HEK293 (cell line): ENCODE measurements at regions of chr18 and their contacts with region 1.

Region 1: GRCh38 chr18:12376718-12377555 is at the start of gene AFG3L2:
- H3K4me3 ChIP-seq: peak within 1 kb of the TSS; percentile 68
- H3K27ac ChIP-seq: peak within 1 kb of the TSS; percentile 99
- H3K4me1 ChIP-seq: peaks cover 16% of the 10 kb centered on the region
- CTCF ChIP-seq: no peak

Region 2: DNA sequence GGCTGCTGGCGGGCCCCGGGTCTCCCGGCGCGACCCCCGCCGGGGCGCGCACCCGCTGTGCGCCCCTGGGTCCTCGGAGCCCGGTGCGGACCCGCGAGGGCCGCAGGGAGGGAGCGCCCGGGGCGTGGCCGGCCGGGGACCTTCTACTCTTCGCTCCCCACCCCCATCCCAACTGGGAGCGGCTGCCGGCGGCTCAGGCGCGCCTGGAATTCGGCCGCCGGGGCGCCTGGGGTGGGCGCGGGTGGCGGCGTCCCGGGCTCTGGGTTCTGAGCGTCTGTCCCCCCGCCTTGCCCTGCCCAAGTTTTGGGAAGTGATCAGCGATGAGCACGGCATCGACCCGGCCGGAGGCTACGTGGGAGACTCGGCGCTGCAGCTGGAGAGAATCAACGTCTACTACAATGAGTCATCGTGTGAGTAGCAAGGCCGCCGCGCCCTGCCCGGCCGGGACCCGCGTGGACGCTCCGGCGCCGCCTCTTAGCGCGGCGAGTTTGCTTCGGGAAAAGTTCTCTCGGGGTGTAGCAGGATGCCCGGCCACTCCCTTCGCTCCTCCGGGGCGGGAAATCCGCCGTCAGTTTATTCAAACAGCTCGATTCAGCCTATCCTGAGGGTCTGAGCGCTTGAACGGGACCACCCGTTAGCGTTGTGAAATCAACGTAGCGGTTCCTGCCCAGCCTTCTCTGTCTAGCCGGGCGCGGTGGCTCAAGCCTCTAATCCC is 68.4 kb before region 1 on chr18:
- CTCF ChIA-PET with region 1: no interaction called
- POLR2A ChIA-PET with region 1: interaction called, 17 read pairs
- H3K4me3 ChIP-seq: peak overlapping the region; percentile 70
- H3K27ac ChIP-seq: peak overlapping the region; percentile 80; the same call in 1 of the 2 replicates
- H3K4me1 ChIP-seq: no peaks in the 10 kb centered on the region
- CTCF ChIP-seq: no peak

Region 3: GRCh38 chr18:12408247-12408869 is 31.4 kb after region 1 on chr18:
- CTCF ChIA-PET with region 1: interaction called, 6 read pairs
- POLR2A ChIA-PET with region 1: interaction called, 35 read pairs
- H3K4me3 ChIP-seq: peak overlapping the region; percentile 52
- H3K27ac ChIP-seq: peak overlapping the region; percentile 94
- H3K4me1 ChIP-seq: peaks cover 14% of the 10 kb centered on the region
- CTCF ChIP-seq: no peak

Region 4: DNA sequence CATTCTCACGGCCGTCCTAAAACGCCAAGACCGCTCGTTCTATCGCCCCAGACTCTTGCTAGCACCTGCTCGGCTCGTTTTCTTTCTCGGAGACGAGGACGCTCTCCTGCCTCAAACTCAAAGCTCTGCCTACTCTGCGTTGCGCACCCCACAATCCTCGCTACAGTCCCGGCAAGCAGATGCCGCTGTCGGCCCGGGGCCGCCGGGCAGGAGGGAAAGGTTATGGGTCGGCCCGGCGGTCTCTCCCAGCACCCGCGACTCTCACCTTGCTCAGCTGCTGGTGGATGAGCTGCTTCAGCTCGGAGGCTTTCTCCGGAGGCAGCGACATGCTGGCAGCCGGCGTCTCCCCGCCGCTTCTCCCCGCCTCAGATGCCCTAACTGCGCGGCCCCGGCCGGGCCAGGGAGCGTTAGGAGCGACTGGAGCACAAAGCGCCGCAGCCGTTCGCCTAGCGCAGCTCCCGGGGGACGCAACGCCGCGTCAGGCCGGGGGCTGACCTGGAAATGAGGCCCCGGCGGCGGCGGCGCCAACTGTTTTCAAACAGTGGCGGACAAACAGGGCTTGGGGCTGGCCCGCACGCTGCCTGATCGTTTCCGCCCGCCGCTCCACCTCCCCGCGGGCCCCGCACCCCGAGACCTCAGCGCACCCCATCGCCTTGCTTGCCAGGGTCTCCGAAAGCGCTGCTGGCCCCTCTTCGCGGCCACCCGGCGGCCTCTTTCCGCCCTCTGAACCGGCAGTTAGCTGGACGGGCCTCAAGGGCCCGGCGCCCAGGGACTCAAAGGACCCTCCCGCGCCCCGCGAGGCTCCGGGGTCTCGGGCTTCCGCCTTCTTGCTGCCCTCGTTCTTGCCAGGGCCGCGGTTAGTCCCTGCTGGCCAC is 325.5 kb after region 1 on chr18 and contains the starts of genes CEP76 and PSMG2:
- CTCF ChIA-PET with region 1: no interaction called
- POLR2A ChIA-PET with region 1: interaction called, 19 read pairs
- H3K4me3 ChIP-seq: peak within 1 kb of the TSS; percentile 87
- H3K27ac ChIP-seq: peak within 1 kb of the TSS; percentile 99
- H3K4me1 ChIP-seq: peaks cover 6% of the 10 kb centered on the region; the same call in 1 of the 2 replicates
- CTCF ChIP-seq: peak; percentile 47